ENCODE measurements at regions of chr5 and their contacts with region 1.

Region 1: GRCh38 chr5:39580702-39581453 is 156.1 kb upstream of the DAB2 start:
- DNase-seq: peak; percentile 53
- H3K4me3 ChIP-seq: no peak overlapping the region
- H3K27ac ChIP-seq: peak overlapping the region; percentile 39
- H3K4me1 ChIP-seq: peaks cover 13% of the 10 kb centered on the region
- H3K27me3 ChIP-seq: no peaks in the 10 kb centered on the region
- CTCF ChIP-seq: no peak

Region 2: GRCh38 chr5:39648532-39649213 is 67.8 kb after region 1 on chr5:
- CTCF ChIA-PET with region 1: no interaction called
- POLR2A ChIA-PET with region 1: no interaction called
- intact Hi-C with region 1: no loop called
- DNase-seq: no peak
- H3K4me3 ChIP-seq: no peak overlapping the region
- H3K27ac ChIP-seq: no peak overlapping the region
- H3K4me1 ChIP-seq: peaks cover 4% of the 10 kb centered on the region
- H3K27me3 ChIP-seq: peaks cover 6% of the 10 kb centered on the region
- CTCF ChIP-seq: no peak

Region 3: DNA sequence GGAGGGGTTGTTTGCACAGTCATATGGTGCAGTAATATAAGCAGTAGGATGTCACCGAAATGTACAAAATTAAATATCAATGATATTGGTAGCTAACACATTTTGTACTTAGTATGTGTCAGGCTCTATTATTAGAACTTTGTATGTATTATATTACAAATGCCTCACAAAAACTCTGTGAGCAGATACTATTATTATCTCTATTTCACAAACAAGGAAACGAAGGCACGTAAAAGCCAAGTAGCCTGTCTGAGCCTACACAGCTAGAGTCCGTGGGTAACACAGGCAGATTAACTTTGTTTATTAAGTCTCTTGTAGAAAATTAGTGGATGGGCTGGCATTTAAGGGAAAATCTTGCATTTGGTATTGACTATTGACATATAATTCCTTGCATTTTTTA is 128.2 kb after region 1 on chr5:
- CTCF ChIA-PET with region 1: no interaction called
- POLR2A ChIA-PET with region 1: no interaction called
- intact Hi-C with region 1: loop called (anchors 5 kb)
- DNase-seq: no peak
- H3K4me3 ChIP-seq: no peak overlapping the region
- H3K27ac ChIP-seq: no peak overlapping the region
- H3K4me1 ChIP-seq: no peaks in the 10 kb centered on the region
- H3K27me3 ChIP-seq: no peaks in the 10 kb centered on the region
- CTCF ChIP-seq: no peak

Region 4: DNA sequence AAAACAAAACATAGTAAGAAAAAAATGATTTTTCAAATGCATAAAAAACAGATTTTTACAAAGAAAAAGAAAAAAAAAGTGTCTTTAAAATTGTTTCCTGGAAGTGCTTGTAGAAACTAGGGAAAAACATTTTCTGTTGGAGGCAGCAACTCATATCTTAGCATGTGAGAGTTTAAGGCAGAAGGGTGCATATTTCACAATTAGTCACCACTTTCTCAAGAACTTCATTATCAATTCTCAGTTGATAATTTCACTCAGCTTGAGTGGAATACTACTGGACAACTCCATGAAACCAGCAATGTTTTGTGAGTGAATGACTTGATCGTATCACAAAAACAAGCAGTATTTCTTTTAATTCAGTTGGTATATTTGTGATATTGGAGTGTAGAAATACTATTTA is 352.2 kb after region 1 on chr5:
- CTCF ChIA-PET with region 1: no interaction called
- POLR2A ChIA-PET with region 1: no interaction called
- intact Hi-C with region 1: loop called (anchors 10 kb)
- DNase-seq: no peak
- H3K4me3 ChIP-seq: no peak overlapping the region
- H3K27ac ChIP-seq: no peak overlapping the region
- H3K4me1 ChIP-seq: no peaks in the 10 kb centered on the region
- H3K27me3 ChIP-seq: peaks cover 18% of the 10 kb centered on the region
- CTCF ChIP-seq: no peak

Region 5: GRCh38 chr5:40688127-40688761 is 1107.4 kb after region 1 on chr5:
- CTCF ChIA-PET with region 1: interaction called, 3 read pairs
- POLR2A ChIA-PET with region 1: no interaction called
- intact Hi-C with region 1: loop called (anchors 2 kb)
- DNase-seq: peak; percentile 88
- H3K4me3 ChIP-seq: no peak overlapping the region
- H3K27ac ChIP-seq: no peak overlapping the region
- H3K4me1 ChIP-seq: peaks cover 4% of the 10 kb centered on the region
- H3K27me3 ChIP-seq: no peaks in the 10 kb centered on the region
- CTCF ChIP-seq: peak; percentile 87

Region 6: DNA sequence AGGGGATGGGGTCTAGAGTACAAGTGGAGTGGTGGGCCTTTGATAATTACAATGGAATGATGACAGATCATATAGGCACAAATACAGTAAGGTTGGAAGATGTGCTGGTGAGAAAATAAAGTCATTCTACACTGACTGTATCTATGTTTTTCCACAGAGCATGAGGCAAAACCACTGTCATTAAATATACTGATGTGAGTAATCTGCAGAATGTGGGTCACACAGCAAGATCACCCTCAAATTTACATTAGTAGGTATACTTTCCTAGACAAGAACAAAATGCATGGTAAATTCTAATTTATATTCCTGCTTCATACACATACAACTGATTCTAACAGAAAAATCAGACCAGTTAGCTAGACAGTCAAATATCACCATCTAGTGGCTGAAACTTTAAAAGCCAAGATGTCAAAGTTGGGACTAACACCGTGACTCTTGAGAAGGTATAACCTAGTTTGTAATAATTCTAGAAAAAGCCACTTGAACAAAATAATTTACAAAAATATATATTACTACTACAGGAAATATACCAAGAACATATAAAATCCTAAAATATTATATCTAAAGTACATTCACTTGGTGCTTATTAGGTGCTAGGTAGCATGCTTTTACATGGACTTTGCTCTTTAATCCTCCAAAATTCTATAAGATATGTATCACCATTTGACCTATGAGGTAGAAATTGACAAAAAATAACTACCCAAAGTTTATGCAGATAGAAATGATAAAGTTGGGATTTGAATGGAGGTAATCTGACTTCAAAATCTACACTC is 1155.4 kb after region 1 on chr5:
- CTCF ChIA-PET with region 1: interaction called, 3 read pairs
- POLR2A ChIA-PET with region 1: no interaction called
- intact Hi-C with region 1: loop called (anchors 5 kb)
- DNase-seq: peak; percentile 70
- H3K4me3 ChIP-seq: no peak overlapping the region
- H3K27ac ChIP-seq: no peak overlapping the region
- H3K4me1 ChIP-seq: no peaks in the 10 kb centered on the region
- H3K27me3 ChIP-seq: no peaks in the 10 kb centered on the region
- CTCF ChIP-seq: peak; percentile 79

Region 7: DNA sequence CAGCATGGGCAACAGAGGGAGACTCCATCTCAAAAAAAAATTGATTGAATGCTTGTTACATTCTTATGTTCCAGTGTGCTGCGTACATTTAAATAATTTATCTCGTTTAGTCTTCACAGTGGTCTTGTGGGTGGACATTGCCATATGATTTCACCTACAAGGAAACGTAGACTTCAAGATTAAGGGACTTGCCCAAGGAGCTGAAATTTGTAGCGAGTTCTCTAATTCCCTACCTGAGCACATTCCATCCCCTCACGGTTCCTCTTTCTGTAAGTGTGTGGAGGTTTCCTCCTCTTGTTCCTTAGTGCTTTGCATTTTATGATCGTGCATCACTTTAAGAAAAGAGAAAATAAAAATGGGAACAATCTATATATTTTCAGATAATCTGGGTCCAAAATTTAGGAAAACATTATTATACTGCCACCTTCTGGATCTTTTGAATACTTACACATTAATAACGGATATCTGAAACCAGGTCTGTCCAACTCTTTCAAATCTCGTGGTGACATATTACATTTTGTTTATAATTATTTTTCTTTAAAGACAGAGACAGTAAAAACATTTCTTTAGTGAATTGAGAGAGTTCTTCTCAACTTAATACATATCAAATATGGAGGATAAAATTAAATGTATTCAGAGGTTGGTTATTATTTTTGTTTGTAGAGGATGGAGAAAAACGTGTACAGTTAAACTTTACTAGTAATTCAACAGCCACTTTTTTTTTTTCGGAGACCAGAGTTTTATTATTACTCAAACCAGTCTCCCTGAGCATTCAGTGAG is 1298.5 kb after region 1 on chr5:
- CTCF ChIA-PET with region 1: interaction called, 3 read pairs
- POLR2A ChIA-PET with region 1: no interaction called
- intact Hi-C with region 1: loop called (anchors 10 kb)
- DNase-seq: peak; percentile 57
- H3K4me3 ChIP-seq: no peak overlapping the region
- H3K27ac ChIP-seq: no peak overlapping the region
- H3K4me1 ChIP-seq: no peaks in the 10 kb centered on the region
- H3K27me3 ChIP-seq: no peaks in the 10 kb centered on the region
- CTCF ChIP-seq: peak; percentile 66; the same call in 1 of the 2 replicates